ENCODE measurements at regions of chr5 and their contacts with region 1.

Region 1: GRCh38 chr5:131303537-131303936 is 39.7 kb downstream of the CDC42SE2 start:
- DNase-seq: no peak
- ATAC-seq: no peak
- H3K4me3 ChIP-seq: no peak overlapping the region
- H3K4me3 Mint-ChIP-seq: no peak overlapping the region
- H3K27ac ChIP-seq: peak overlapping the region in 1 of 2 donors; percentile 67
- H3K27ac Mint-ChIP-seq: no peak overlapping the region
- H3K4me1 ChIP-seq: peaks cover 22 to 33% of the 10 kb centered on the region in 2 donors
- H3K4me1 Mint-ChIP-seq: peaks cover 60% of the 10 kb centered on the region
- H3K27me3 ChIP-seq: no peaks in the 10 kb centered on the region
- H3K27me3 Mint-ChIP-seq: no peaks in the 10 kb centered on the region
- CTCF ChIP-seq: no peak

Region 2: DNA sequence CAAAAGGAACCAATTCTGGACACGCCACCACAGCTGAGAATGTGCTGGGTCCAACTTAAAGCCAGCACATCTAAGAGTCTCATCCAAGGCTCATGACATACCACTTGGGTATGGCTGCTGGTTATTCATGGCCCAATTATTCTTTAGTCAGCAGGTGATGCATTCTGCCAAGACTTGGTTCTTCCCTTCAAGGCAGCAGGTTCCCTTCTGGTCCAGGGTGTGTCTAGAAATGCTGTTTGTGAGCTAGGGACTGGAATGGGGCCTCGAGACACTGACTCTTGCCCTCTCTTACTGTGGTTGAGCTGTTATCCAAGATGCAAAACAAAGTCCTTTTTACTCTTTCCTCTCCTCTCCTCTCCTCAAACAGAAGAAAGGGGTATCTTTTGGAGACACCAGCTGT is 661.1 kb before region 1 on chr5:
- CTCF ChIA-PET with region 1: no interaction called
- POLR2A ChIA-PET with region 1: no interaction called
- intact Hi-C with region 1: no loop called
- DNase-seq: no peak
- ATAC-seq: no peak
- H3K4me3 ChIP-seq: no peak overlapping the region
- H3K4me3 Mint-ChIP-seq: no peak overlapping the region
- H3K27ac ChIP-seq: no peak overlapping the region
- H3K27ac Mint-ChIP-seq: no peak overlapping the region
- H3K4me1 ChIP-seq: no peaks in the 10 kb centered on the region
- H3K4me1 Mint-ChIP-seq: no peaks in the 10 kb centered on the region
- H3K27me3 ChIP-seq: no peaks in the 10 kb centered on the region
- H3K27me3 Mint-ChIP-seq: no peaks in the 10 kb centered on the region
- CTCF ChIP-seq: no peak

Region 3: DNA sequence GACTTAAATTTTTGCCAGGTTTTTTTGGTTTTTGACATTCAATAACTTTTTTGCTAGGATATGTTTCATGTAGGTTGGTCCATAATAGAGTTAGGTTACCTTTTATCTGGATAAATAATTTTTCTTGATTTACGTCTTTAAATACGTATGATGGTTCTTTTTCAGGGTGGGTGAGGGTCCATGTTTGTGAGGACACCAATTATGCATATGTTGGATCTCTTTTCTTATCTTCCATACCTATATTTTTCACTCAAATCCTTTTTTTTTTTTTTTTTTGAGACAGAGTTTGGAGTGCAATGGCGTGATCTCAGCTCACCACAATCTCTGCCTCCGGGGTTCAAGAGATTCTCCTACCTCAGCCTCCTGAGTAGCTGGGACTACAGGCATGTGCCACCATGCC is 57.0 kb before region 1 on chr5:
- CTCF ChIA-PET with region 1: no interaction called
- POLR2A ChIA-PET with region 1: interaction called, 10 read pairs
- intact Hi-C with region 1: no loop called
- DNase-seq: no peak
- ATAC-seq: no peak
- H3K4me3 ChIP-seq: no peak overlapping the region
- H3K4me3 Mint-ChIP-seq: no peak overlapping the region
- H3K27ac ChIP-seq: no peak overlapping the region
- H3K27ac Mint-ChIP-seq: no peak overlapping the region
- H3K4me1 ChIP-seq: peaks cover 7 to 24% of the 10 kb centered on the region in 2 donors
- H3K4me1 Mint-ChIP-seq: peaks cover 31% of the 10 kb centered on the region
- H3K27me3 ChIP-seq: no peaks in the 10 kb centered on the region
- H3K27me3 Mint-ChIP-seq: no peaks in the 10 kb centered on the region
- CTCF ChIP-seq: no peak

Region 4: DNA sequence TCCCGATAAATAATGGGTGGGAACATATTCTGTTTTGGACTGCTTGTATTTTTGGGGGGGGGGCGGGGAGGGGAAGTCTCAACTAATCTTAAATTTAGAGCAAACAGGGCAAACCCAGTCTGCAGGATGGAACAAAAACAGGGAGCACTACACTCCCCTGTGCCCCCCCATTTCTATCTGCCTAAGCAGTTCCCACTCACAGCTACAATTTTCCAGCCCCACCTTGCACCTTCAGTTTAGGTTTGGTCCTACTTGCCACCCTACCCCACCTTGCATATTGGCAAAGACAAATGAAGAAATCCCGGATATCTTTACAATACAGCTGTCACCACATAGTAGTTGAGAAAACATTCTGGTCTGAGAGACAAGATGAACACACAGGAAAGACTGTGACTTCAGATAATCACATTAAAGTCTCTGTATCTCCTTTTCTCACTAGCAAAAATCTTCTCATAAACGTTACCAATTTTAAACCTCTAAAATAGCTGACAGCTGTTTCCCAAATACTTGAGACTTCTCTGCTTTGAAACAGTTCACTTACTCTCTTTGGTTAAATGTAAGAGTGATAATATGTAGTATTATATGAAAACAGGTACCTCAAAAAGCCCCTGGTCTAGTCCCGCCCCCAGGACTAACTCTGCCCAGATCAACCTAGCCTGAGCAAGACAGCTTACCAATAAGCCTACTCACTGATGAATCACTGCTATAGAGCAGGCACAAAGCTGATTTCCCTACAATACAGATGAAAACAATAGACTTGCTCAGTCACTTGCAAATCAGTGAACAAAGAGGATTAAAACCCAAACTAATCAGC is 336.7 kb after region 1 on chr5:
- CTCF ChIA-PET with region 1: no interaction called
- POLR2A ChIA-PET with region 1: no interaction called
- intact Hi-C with region 1: no loop called
- DNase-seq: peak; percentile 57
- ATAC-seq: peak; percentile 81
- H3K4me3 ChIP-seq: no peak overlapping the region
- H3K4me3 Mint-ChIP-seq: peak overlapping the region; percentile 72
- H3K27ac ChIP-seq: peak overlapping the region; percentile 54 to 78
- H3K27ac Mint-ChIP-seq: peak overlapping the region; percentile 89
- H3K4me1 ChIP-seq: peaks cover 24 to 30% of the 10 kb centered on the region in 2 donors
- H3K4me1 Mint-ChIP-seq: peaks cover 41% of the 10 kb centered on the region
- H3K27me3 ChIP-seq: no peaks in the 10 kb centered on the region
- H3K27me3 Mint-ChIP-seq: no peaks in the 10 kb centered on the region
- CTCF ChIP-seq: no peak

Measured in B cell (primary cell).